ENCODE measurements at regions of chr2 and their contacts with region 1.

Region 1: DNA sequence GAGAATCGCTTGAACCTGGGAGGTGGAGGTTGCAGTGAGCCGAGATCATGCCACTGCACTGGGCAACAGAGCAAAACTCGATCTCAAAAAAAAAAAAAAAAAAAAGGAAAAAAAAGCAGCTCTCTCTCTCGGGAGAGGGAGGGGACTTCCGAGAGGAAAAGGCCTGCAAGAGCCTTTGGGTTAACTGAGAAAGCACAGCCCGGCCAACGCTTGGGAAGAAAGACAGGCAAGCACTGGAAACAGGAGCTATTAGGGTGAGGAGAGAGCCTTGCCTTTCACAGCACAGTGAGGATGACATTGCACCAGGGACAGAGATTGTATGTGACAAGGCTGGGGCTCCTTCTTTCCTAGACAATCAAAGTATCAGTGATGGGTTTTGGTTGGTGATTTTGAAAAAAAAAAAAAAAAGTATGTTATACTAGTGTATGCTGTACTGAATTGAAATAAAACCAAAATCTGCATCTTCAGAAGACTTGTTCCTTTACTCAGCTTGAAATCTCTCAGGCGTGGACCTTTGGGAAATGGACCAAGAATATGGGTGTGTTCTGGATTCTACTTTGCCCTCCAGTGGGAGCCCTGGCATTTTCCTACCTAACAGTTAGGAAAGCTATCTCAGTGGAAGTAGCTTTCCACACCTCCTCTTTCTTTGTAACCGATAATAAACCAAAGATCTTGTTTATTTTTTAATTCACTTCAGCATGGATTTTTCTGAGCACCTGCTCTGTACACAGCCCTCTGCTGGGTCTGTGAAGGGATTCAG is 16.7 kb downstream of the SRSF7 start:
- DNase-seq: no peak
- H3K4me3 ChIP-seq: no peak overlapping the region
- H3K27ac ChIP-seq: no peak overlapping the region
- H3K4me1 ChIP-seq: no peaks in the 10 kb centered on the region; a peak in 1 of 4 replicates
- H3K27me3 ChIP-seq: no peaks in the 10 kb centered on the region
- CTCF ChIP-seq: no peak
- EP300 ChIP-seq: no peak
- RAD21 ChIP-seq: no peak

Region 2: GRCh38 chr2:38720613-38721241 is 13.8 kb before region 1 on chr2:
- CTCF ChIA-PET with region 1: interaction called, 15 read pairs
- POLR2A ChIA-PET with region 1: no interaction called
- DNase-seq: no peak
- H3K4me3 ChIP-seq: no peak overlapping the region
- H3K27ac ChIP-seq: peak overlapping the region in 1 of 2 experiments; percentile 3; a peak in 1 of 4 replicates
- H3K4me1 ChIP-seq: no peaks in the 10 kb centered on the region
- H3K27me3 ChIP-seq: no peaks in the 10 kb centered on the region
- CTCF ChIP-seq: no peak
- EP300 ChIP-seq: no peak
- RAD21 ChIP-seq: no peak

Region 3: DNA sequence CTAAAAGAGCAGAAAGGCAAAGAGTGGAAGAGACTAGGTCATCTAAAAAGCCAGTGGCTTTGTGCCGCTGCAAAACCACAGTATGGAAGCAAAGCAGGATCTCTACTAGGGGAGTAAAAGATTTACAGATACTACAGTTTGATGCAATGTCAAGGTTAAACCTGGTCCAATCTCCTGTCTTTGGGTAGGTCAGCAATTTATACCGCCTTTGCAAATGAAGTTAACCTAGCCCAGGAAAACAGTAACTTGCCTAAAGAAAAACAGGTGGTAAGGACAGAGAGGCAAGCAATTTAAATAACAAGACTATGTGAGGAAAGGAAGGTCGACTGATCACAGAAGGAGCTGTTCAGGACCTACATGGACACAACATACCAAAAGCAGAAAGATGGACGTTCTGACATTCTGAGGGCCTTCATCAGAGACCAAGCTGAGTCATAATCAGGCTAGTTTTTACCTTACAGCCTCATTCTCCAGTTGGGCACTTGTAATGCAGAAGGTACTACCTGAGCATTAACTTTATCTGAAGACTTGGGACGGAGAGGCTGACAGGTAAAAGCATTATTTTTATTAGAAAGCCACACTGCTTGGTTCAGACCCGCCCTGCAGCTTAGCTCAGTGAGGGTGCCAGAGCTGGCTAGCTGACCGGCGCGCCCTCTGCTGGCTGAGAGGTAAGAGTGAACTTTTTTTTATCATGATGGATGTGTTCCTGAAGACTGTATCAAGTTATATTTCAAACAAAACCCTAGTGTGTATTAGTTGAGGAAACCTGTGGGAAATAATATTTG is 493.3 kb after region 1 on chr2:
- CTCF ChIA-PET with region 1: no interaction called
- POLR2A ChIA-PET with region 1: no interaction called
- DNase-seq: peak; percentile 81
- H3K4me3 ChIP-seq: no peak overlapping the region
- H3K27ac ChIP-seq: no peak overlapping the region
- H3K4me1 ChIP-seq: peaks cover 0 to 2% of the 10 kb centered on the region in 2 experiments; a peak in 1 of 4 replicates
- H3K27me3 ChIP-seq: no peaks in the 10 kb centered on the region
- CTCF ChIP-seq: peak; percentile 99
- EP300 ChIP-seq: no peak
- RAD21 ChIP-seq: peak; percentile 90